Dendritic cell treated with granulocyte-macrophage colony-stimulating factor and Interleukin-4, amounts not matched to agents 40 ng/mL and 50 ng/mL, for 4 days (primary cell): ENCODE measurements at regions of chr12 and their contacts with region 1.

Region 1: DNA sequence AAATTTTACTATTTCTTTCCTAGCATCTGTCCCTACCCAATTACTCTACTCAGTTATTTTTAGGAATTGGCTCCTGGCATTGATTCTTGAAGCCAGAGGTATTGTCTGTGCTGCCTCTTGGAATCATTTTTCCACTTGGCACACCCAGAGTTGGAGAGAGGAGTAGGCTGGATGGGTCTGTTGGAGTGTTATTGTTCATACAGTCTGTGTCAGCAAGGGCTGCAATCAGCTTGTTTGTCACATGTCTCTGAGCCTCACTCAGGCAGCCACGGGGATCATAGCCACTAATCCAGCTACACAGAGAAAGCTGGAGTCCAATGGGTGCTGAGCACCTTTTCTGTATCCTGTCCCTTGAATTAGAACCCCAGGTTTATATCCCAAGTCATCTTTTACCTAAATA is 176.0 kb upstream of the DYRK2 start:
- H3K4me3 Mint-ChIP-seq: no peak overlapping the region
- H3K27ac Mint-ChIP-seq: no peak overlapping the region
- H3K4me1 Mint-ChIP-seq: no peaks in the 10 kb centered on the region
- H3K27me3 Mint-ChIP-seq: peaks cover 7% of the 10 kb centered on the region

Region 2: GRCh38 chr12:67430708-67431335 is 41.7 kb before region 1 on chr12:
- intact Hi-C with region 1: no loop called
- H3K4me3 Mint-ChIP-seq: no peak overlapping the region
- H3K27ac Mint-ChIP-seq: no peak overlapping the region
- H3K4me1 Mint-ChIP-seq: peaks cover 10% of the 10 kb centered on the region
- H3K27me3 Mint-ChIP-seq: peaks cover 18% of the 10 kb centered on the region

Region 3: DNA sequence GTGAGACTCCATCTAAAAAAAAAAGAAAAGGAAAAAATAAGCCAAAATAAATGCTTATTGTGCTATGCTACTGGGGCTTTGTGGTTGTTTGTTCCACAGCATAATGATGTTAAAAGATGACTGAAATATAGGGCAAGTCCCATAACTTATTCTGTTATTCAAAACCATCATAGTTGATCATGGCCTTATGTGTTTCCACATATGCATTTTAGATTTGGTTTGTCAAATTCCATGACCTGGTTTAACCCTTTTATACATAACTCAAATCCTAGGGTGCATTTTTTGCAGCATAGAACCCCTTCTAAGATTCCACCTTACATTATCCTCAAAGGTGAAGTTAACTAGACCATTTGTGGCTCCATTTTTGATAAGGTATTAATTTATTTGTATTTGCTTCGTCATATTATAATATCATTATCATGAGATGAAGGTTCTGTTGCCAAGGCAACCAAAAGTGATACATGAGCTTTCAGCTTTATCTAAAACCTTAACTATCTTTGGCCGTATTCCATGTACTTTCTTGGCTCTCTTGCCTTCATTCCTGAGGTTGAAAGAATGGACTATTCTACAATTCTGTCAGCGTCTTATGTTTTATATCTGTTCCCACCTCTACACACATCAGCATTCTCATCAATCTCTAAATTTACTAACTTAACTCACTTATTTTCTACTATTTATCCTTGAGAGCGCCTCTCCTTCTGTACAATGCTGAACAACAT is 37.3 kb after region 1 on chr12:
- intact Hi-C with region 1: loop called (anchors 5 kb)
- H3K4me3 Mint-ChIP-seq: no peak overlapping the region
- H3K27ac Mint-ChIP-seq: no peak overlapping the region
- H3K4me1 Mint-ChIP-seq: peaks cover 5% of the 10 kb centered on the region
- H3K27me3 Mint-ChIP-seq: peaks cover 31% of the 10 kb centered on the region

Region 4: GRCh38 chr12:67842124-67842523 is 369.6 kb after region 1 on chr12:
- intact Hi-C with region 1: no loop called
- H3K4me3 Mint-ChIP-seq: no peak overlapping the region
- H3K27ac Mint-ChIP-seq: no peak overlapping the region
- H3K4me1 Mint-ChIP-seq: no peaks in the 10 kb centered on the region
- H3K27me3 Mint-ChIP-seq: no peaks in the 10 kb centered on the region